ENCODE measurements at regions of chr6 and their contacts with region 1.

Region 1: DNA sequence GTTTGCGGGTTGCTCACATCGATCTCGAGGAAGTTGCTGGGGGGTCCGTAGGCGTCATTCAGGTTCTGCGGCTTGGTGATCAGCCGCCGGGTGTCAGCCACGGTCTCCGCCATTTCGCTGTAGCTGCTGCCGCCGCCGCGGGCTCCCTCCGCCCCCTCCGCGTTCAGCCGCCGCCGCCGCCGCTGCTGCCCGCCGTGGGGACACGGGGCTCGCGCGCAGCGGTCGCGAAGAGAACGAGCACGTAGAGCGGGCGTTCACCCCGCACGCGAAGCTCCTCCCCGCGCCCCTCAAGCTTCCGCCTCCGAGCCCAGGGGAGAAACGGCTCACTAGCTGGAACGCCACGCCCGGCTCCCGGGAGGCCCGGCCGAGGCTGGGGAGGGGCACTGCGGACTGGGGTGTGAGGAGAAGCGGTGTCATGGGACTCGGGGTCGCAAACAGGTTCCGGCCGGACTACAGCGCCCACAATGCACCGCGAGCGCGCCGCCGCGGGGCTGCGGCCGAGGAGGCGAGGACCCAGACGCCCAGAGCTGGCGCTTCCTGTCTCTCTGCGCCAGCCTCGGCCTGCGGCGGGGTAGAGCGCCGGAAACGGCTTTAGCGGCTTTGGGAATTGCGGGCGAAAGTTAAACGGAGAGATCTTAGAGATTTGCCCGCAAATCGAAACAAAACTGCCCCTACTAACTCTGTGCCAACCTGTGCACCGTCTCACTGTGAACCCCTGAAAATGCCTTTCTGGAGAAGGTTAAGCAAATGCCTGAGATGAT is at the start of gene SNX3:
- DNase-seq: peak; percentile 81 to 92 (median 91)
- ATAC-seq: peak; percentile 92
- H3K4me3 ChIP-seq: peak within 1 kb of the TSS; percentile 76
- H3K4me3 Mint-ChIP-seq: peak within 1 kb of the TSS; percentile 78 to 97 (median 91)
- H3K27ac ChIP-seq: peak within 1 kb of the TSS; percentile 96
- H3K27ac Mint-ChIP-seq: peak within 1 kb of the TSS; percentile 85 to 98 (median 96)
- H3K4me1 ChIP-seq: peaks cover 0 to 8% of the 10 kb centered on the region in 2 donors
- H3K4me1 Mint-ChIP-seq: peaks cover 16 to 40% (median 26%) of the 10 kb centered on the region in 7 donors
- H3K27me3 ChIP-seq: no peaks in the 10 kb centered on the region
- H3K27me3 Mint-ChIP-seq: peaks cover 0 to 14% (median 0%) of the 10 kb centered on the region in 5 donors
- total RNA-seq, gene SNX3: 42.5 to 87.4 (median 65.8) TPM

Region 2: GRCh38 chr6:106629103-106629858 is 1631.7 kb before region 1 on chr6 and contains the starts of genes QRSL1 and RTN4IP1:
- CTCF ChIA-PET with region 1: no interaction called
- POLR2A ChIA-PET with region 1: no interaction called
- intact Hi-C with region 1: loop called in 1 of 2 experiments (anchors 2 kb)
- DNase-seq: peak; percentile 67 to 94 (median 90)
- ATAC-seq: peak; percentile 98
- H3K4me3 ChIP-seq: peak within 1 kb of the TSS; percentile 87
- H3K4me3 Mint-ChIP-seq: peak within 1 kb of the TSS; percentile 93 to 100 (median 98)
- H3K27ac ChIP-seq: peak within 1 kb of the TSS; percentile 94
- H3K27ac Mint-ChIP-seq: peak within 1 kb of the TSS; percentile 96 to 99 (median 98)
- H3K4me1 ChIP-seq: peaks cover 7 to 13% of the 10 kb centered on the region in 2 donors
- H3K4me1 Mint-ChIP-seq: peaks cover 13 to 67% (median 38%) of the 10 kb centered on the region in 7 donors
- H3K27me3 ChIP-seq: no peaks in the 10 kb centered on the region
- H3K27me3 Mint-ChIP-seq: no peaks in the 10 kb centered on the region
- total RNA-seq, gene QRSL1: 8.0 to 14.8 (median 13.6) TPM
- total RNA-seq, gene RTN4IP1: 5.1 to 6.4 (median 5.6) TPM

Region 3: GRCh38 chr6:107114213-107114905 is 1146.6 kb before region 1 on chr6:
- CTCF ChIA-PET with region 1: no interaction called
- POLR2A ChIA-PET with region 1: no interaction called
- intact Hi-C with region 1: loop called in 1 of 2 experiments (anchors 10 kb)
- DNase-seq: peak; percentile 39 to 85 (median 67)
- ATAC-seq: peak; percentile 88
- H3K4me3 ChIP-seq: peak overlapping the region; percentile 32
- H3K4me3 Mint-ChIP-seq: peak overlapping the region; percentile 71 to 88 (median 85)
- H3K27ac ChIP-seq: no peak overlapping the region
- H3K27ac Mint-ChIP-seq: peak overlapping the region in 5 of 9 donors; percentile 49 to 77 (median 63)
- H3K4me1 ChIP-seq: peaks cover 14% of the 10 kb centered on the region in 2 donors
- H3K4me1 Mint-ChIP-seq: peaks cover 8 to 21% (median 18%) of the 10 kb centered on the region in 7 donors
- H3K27me3 ChIP-seq: no peaks in the 10 kb centered on the region
- H3K27me3 Mint-ChIP-seq: peaks cover 0 to 22% (median 7%) of the 10 kb centered on the region in 5 donors

Region 4: GRCh38 chr6:108074359-108075144 is 186.4 kb before region 1 on chr6 and contains the start of gene OSTM1:
- CTCF ChIA-PET with region 1: no interaction called
- POLR2A ChIA-PET with region 1: interaction called, 6 read pairs
- intact Hi-C with region 1: loop called (anchors 1 kb)
- DNase-seq: peak; percentile 88 to 98 (median 94)
- ATAC-seq: peak; percentile 99
- H3K4me3 ChIP-seq: peak within 1 kb of the TSS; percentile 99
- H3K4me3 Mint-ChIP-seq: peak within 1 kb of the TSS; percentile 84 to 94 (median 90)
- H3K27ac ChIP-seq: peak within 1 kb of the TSS; percentile 89
- H3K27ac Mint-ChIP-seq: peak within 1 kb of the TSS; percentile 81 to 98 (median 91)
- H3K4me1 ChIP-seq: peaks cover 18% of the 10 kb centered on the region in 2 donors
- H3K4me1 Mint-ChIP-seq: peaks cover 11 to 35% (median 23%) of the 10 kb centered on the region in 7 donors
- H3K27me3 ChIP-seq: no peaks in the 10 kb centered on the region
- H3K27me3 Mint-ChIP-seq: peaks cover 0 to 25% (median 4%) of the 10 kb centered on the region in 5 donors
- total RNA-seq, gene OSTM1: 25.0 to 48.9 (median 36.7) TPM

Region 5: GRCh38 chr6:108294727-108295625 is 34.0 kb after region 1 on chr6 and contains the start of gene AFG1L:
- CTCF ChIA-PET with region 1: interaction called, 4 read pairs
- POLR2A ChIA-PET with region 1: interaction called, 41 read pairs
- intact Hi-C with region 1: loop called (anchors 1 kb)
- DNase-seq: peak; percentile 81 to 90 (median 88)
- ATAC-seq: peak; percentile 96
- H3K4me3 ChIP-seq: peak within 1 kb of the TSS; percentile 99
- H3K4me3 Mint-ChIP-seq: peak within 1 kb of the TSS; percentile 93 to 99 (median 98)
- H3K27ac ChIP-seq: peak within 1 kb of the TSS; percentile 88
- H3K27ac Mint-ChIP-seq: peak within 1 kb of the TSS; percentile 95 to 100 (median 99)
- H3K4me1 ChIP-seq: peaks cover 10 to 13% of the 10 kb centered on the region in 2 donors
- H3K4me1 Mint-ChIP-seq: peaks cover 11 to 37% (median 26%) of the 10 kb centered on the region in 7 donors
- H3K27me3 ChIP-seq: no peaks in the 10 kb centered on the region
- H3K27me3 Mint-ChIP-seq: peaks cover 0 to 3% (median 0%) of the 10 kb centered on the region in 5 donors
- total RNA-seq, gene AFG1L: 4.1 to 9.2 (median 7.2) TPM

Region 6: GRCh38 chr6:108492131-108492766 is 231.3 kb after region 1 on chr6:
- CTCF ChIA-PET with region 1: no interaction called
- POLR2A ChIA-PET with region 1: interaction called, 3 read pairs
- intact Hi-C with region 1: loop called (anchors 2 to 10 kb)
- DNase-seq: peak in 3 of 9 donors; percentile 16 to 18 (median 18)
- ATAC-seq: peak; percentile 38
- H3K4me3 ChIP-seq: no peak overlapping the region
- H3K4me3 Mint-ChIP-seq: no peak overlapping the region
- H3K27ac ChIP-seq: no peak overlapping the region
- H3K27ac Mint-ChIP-seq: no peak overlapping the region
- H3K4me1 ChIP-seq: no peaks in the 10 kb centered on the region
- H3K4me1 Mint-ChIP-seq: no peaks in the 10 kb centered on the region
- H3K27me3 ChIP-seq: no peaks in the 10 kb centered on the region
- H3K27me3 Mint-ChIP-seq: peaks cover 0 to 11% (median 0%) of the 10 kb centered on the region in 5 donors

Region 7: GRCh38 chr6:108848116-108848868 is 587.3 kb after region 1 on chr6 and contains the start of gene ARMC2:
- CTCF ChIA-PET with region 1: no interaction called
- POLR2A ChIA-PET with region 1: no interaction called
- intact Hi-C with region 1: loop called (anchors 5 to 10 kb)
- DNase-seq: peak; percentile 72 to 95 (median 79)
- ATAC-seq: peak; percentile 94
- H3K4me3 ChIP-seq: peak within 1 kb of the TSS; percentile 90
- H3K4me3 Mint-ChIP-seq: peak within 1 kb of the TSS; percentile 75 to 93 (median 88)
- H3K27ac ChIP-seq: peak within 1 kb of the TSS; percentile 69
- H3K27ac Mint-ChIP-seq: peak within 1 kb of the TSS; percentile 72 to 93 (median 85)
- H3K4me1 ChIP-seq: peaks cover 6 to 13% of the 10 kb centered on the region in 2 donors
- H3K4me1 Mint-ChIP-seq: peaks cover 11 to 39% (median 29%) of the 10 kb centered on the region in 7 donors
- H3K27me3 ChIP-seq: no peaks in the 10 kb centered on the region
- H3K27me3 Mint-ChIP-seq: peaks cover 0 to 36% (median 0%) of the 10 kb centered on the region in 5 donors
- total RNA-seq, gene ARMC2: 6.2 to 12.7 (median 7.9) TPM

Measured in naive thymus-derived CD4-positive, alpha-beta T cell (primary cell).